ENCODE measurements at regions of chr13 and their contacts with region 1.

Region 1: DNA sequence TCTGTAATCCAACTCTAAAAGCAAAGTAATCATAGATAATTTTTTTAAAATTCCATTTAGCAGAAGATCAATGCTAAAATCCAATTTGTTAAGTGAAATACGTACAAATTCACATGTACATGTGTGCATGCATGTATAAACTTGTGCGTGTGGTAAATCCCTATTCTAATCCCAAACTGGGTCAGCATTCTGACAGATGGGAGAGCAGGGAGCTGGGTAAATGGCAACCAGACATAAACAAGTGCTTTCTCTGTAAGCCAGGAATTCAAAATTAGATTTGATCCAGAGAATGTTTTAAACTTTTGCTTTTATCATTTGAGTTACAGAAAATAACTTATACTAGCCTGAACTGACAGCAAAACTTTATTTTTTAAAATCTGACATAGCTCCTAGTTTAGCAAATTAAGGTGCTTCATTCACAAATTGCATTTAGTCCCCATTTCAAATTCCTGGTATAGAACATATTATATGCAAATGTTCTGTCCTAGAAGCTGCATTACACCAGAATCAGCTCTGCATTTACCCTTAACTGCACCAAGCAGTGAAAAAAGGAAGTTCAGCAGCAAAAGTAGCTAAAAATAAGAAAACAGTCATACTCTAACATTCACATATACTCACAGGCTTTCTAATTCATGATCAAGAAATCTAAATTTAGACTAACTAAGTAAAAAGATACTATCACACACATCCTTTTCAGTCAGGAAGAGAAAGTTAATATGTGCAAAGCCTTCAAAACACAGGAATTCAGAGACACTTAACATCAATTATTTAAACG is 32.6 kb downstream of the UBL3 start:
- H3K4me3 Mint-ChIP-seq: no peak overlapping the region
- H3K27ac Mint-ChIP-seq: no peak overlapping the region
- H3K4me1 Mint-ChIP-seq: peaks cover 33% of the 10 kb centered on the region
- H3K27me3 Mint-ChIP-seq: no peaks in the 10 kb centered on the region

Region 2: GRCh38 chr13:29640665-29641064 is 177.1 kb before region 1 on chr13:
- intact Hi-C with region 1: no loop called
- H3K4me3 Mint-ChIP-seq: no peak overlapping the region
- H3K27ac Mint-ChIP-seq: no peak overlapping the region
- H3K4me1 Mint-ChIP-seq: no peaks in the 10 kb centered on the region
- H3K27me3 Mint-ChIP-seq: peaks cover 2% of the 10 kb centered on the region

Region 3: DNA sequence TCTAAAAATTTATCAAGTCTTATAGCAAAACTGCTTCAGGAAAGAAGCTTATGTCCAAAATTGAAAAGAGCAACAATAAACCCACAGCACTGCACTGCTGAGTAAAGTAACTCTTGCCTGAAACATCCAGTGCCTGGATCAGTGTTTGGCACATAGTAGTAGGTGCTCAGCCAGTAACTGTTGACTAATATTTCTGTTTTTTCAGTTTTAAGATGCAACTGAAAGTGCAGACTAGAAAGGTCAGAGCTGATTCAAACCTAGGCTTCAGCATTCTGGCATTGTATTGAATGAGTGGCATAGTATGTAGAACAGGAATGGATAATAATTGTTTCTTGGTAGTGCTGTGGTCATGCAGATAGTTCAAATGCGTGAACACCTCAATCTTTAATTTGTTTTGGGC is 35.0 kb before region 1 on chr13:
- intact Hi-C with region 1: loop called (anchors 5 kb)
- H3K4me3 Mint-ChIP-seq: no peak overlapping the region
- H3K27ac Mint-ChIP-seq: no peak overlapping the region
- H3K4me1 Mint-ChIP-seq: peaks cover 13% of the 10 kb centered on the region
- H3K27me3 Mint-ChIP-seq: no peaks in the 10 kb centered on the region

Region 4: GRCh38 chr13:29830000-29830399 is 12.2 kb after region 1 on chr13:
- intact Hi-C with region 1: no loop called
- H3K4me3 Mint-ChIP-seq: no peak overlapping the region
- H3K27ac Mint-ChIP-seq: no peak overlapping the region
- H3K4me1 Mint-ChIP-seq: peaks cover 48% of the 10 kb centered on the region
- H3K27me3 Mint-ChIP-seq: no peaks in the 10 kb centered on the region

Measured in dendritic cell treated with granulocyte-macrophage colony-stimulating factor and Interleukin-4, amounts not matched to agents 40 ng/mL and 50 ng/mL, for 4 days (primary cell).